HepG2 (cell line): ENCODE measurements at regions of chr4 and their contacts with region 1.

Region 1: GRCh38 chr4:145618932-145619638 is at the start of gene MMAA:
- DNase-seq: peak; percentile 83
- ATAC-seq: peak; percentile 99
- H3K4me3 ChIP-seq: peak within 1 kb of the TSS; percentile 80 to 91 (median 90)
- H3K27ac ChIP-seq: peak within 1 kb of the TSS; percentile 92
- H3K4me1 ChIP-seq: peaks cover 22% of the 10 kb centered on the region
- H3K27me3 ChIP-seq: no peaks in the 10 kb centered on the region; a peak in 1 of 5 replicates
- CTCF ChIP-seq: peak; percentile 81
- EP300 ChIP-seq: no peak
- POLR2A ChIP-seq: peak; percentile 88 to 94
- RAD21 ChIP-seq: peak; percentile 29
- total RNA-seq, gene MMAA: 2.8 and 4.5 TPM in 2 replicates

Region 2: GRCh38 chr4:144174401-144175067 is 1444.6 kb before region 1 on chr4:
- CTCF ChIA-PET with region 1: no interaction called
- POLR2A ChIA-PET with region 1: no interaction called
- in situ Hi-C with region 1: loop called (anchors 10 kb)
- intact Hi-C with region 1: loop called (anchors 10 kb)
- DNase-seq: peak; percentile 22
- ATAC-seq: peak; percentile 47; the same call in 2 of the 3 replicates
- H3K4me3 ChIP-seq: no peak overlapping the region
- H3K27ac ChIP-seq: no peak overlapping the region
- H3K4me1 ChIP-seq: no peaks in the 10 kb centered on the region
- H3K27me3 ChIP-seq: no peaks in the 10 kb centered on the region
- CTCF ChIP-seq: peak; percentile 50
- EP300 ChIP-seq: no peak
- POLR2A ChIP-seq: no peak
- RAD21 ChIP-seq: no peak

Region 3: DNA sequence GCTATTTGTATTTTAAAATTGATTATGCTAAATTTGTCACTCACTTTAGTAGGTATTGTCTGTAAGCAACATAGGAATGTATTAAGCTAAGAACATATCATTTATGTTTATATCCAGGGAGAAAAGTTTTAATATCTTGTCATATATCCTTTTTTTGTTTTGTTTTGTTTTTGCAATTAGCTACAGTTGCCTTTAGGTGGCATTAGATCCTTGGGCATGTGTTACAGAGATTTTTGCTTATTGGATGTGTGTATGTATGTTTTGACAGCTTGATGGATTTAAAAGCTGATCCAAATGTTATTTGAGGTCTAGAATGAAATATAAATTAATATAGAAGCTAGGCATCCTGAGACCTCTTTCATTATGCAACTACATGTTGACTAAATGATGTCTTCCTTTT is 402.6 kb before region 1 on chr4:
- CTCF ChIA-PET with region 1: interaction called, 3 read pairs
- POLR2A ChIA-PET with region 1: interaction called, 3 read pairs
- in situ Hi-C with region 1: loop called (anchors 10 kb)
- intact Hi-C with region 1: loop called (anchors 5 kb)
- DNase-seq: no peak
- ATAC-seq: no peak
- H3K4me3 ChIP-seq: no peak overlapping the region
- H3K27ac ChIP-seq: no peak overlapping the region
- H3K4me1 ChIP-seq: no peaks in the 10 kb centered on the region
- H3K27me3 ChIP-seq: no peaks in the 10 kb centered on the region; a peak in 2 of 5 replicates
- CTCF ChIP-seq: peak; percentile 53
- EP300 ChIP-seq: no peak
- POLR2A ChIP-seq: no peak
- RAD21 ChIP-seq: no peak

Region 4: GRCh38 chr4:145481164-145481941 is 137.7 kb before region 1 on chr4 and contains the start of gene SMAD1:
- CTCF ChIA-PET with region 1: no interaction called
- POLR2A ChIA-PET with region 1: no interaction called
- in situ Hi-C with region 1: no loop called
- intact Hi-C with region 1: loop called (anchors 5 kb)
- DNase-seq: peak; percentile 53
- ATAC-seq: peak; percentile 93
- H3K4me3 ChIP-seq: peak within 1 kb of the TSS; percentile 81 to 83 (median 82)
- H3K27ac ChIP-seq: peak within 1 kb of the TSS; percentile 89
- H3K4me1 ChIP-seq: peaks cover 36% of the 10 kb centered on the region
- H3K27me3 ChIP-seq: no peaks in the 10 kb centered on the region; a peak in 1 of 5 replicates
- CTCF ChIP-seq: no peak
- EP300 ChIP-seq: no peak
- POLR2A ChIP-seq: peak; percentile 57 to 58; a peak in 3 of 4 replicates
- RAD21 ChIP-seq: no peak; the same call in 1 of the 2 replicates
- total RNA-seq, gene SMAD1: 12.7 and 14.0 TPM in 2 replicates

Region 5: DNA sequence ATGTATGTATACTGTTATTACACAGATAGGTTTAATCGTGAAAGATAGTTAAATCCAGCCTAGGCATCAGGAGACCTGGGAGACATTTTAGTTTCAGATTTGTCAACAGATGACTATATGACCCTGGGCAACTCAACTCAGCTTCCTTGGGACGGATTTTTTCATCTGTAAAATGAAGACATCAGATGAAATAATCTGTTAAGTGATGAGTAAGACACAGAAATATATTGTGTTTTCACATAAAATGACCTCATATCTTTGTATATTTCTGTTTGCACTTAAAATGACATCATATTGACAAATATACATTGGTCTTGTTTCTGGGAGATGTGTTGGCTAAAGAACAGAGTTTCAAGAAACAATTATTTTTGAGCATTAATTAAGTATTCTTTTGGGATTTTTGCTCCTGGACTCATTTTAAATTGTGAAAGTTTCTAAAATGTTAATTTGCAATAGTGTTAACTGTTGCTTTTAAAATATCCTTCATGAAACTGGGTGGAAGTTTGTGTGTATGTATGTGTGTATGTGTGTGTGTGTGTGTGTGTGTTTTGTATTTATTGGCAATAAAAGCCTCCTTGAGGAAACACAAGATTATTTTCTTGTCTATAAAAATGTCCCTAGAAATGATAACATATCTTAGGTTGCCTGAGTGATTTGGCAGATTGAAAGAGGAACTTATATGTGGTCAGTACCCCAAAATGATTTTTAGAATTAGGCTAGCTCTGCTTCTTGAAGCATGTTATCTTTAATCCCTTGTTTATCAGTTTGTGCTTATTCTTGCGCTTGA is 29.0 kb before region 1 on chr4:
- CTCF ChIA-PET with region 1: no interaction called
- POLR2A ChIA-PET with region 1: no interaction called
- in situ Hi-C with region 1: no loop called
- intact Hi-C with region 1: no loop called
- DNase-seq: no peak
- ATAC-seq: no peak
- H3K4me3 ChIP-seq: no peak overlapping the region
- H3K27ac ChIP-seq: no peak overlapping the region
- H3K4me1 ChIP-seq: no peaks in the 10 kb centered on the region
- H3K27me3 ChIP-seq: no peaks in the 10 kb centered on the region; a peak in 1 of 5 replicates
- CTCF ChIP-seq: no peak
- EP300 ChIP-seq: no peak
- POLR2A ChIP-seq: no peak
- RAD21 ChIP-seq: no peak

Region 6: DNA sequence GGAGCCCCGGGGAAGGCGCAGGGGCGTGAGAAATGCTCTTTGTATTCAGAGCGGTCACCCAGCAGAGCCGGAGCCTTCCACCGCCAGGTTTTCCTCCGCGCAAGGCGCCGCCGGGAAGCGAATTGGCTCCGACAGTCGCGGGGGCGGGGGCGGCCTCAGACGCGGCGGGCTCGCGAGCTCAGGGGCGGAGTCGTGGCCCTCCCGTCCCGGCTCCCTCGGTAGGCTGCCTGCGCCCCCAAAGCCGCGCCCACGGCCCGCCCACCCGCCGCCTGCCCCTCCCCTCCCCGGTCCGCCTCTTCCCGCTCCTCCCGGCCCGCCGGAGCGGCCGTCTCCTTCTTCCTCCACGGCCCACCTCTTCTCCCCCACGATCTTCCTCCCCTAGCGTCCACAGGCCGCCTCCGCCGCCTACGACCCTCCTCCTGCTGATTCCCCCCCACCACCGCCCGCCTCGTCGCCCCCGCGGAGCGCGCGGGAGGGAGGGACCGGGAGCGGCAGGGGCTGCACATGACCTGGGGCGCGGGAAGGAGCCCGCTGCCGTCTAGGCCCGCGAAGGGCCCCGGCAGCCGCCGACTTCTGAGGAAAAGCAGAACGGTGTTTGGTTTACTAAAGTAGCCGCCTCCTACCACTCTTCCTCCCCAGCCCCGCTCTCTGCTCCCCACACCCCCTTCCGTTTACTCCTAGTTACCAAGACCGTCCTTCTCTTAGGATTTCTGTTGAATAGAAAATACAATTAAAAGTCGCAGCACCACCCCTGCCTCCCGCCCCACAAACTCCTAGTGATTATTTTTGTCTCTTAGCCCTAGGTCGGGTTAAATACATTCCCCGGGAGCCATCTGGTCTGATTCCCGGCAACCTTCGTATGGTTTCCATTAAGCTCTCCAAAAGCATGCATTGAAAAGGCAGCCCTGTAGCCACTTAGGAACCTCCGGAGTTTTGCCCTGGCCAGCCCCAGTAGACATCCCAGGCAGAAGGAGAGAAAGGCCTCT is 114.1 kb after region 1 on chr4:
- CTCF ChIA-PET with region 1: no interaction called
- POLR2A ChIA-PET with region 1: no interaction called
- in situ Hi-C with region 1: no loop called
- intact Hi-C with region 1: loop called (anchors 2 kb)
- DNase-seq: peak; percentile 53
- ATAC-seq: peak; percentile 83
- H3K4me3 ChIP-seq: peak overlapping the region; percentile 59 to 73 (median 60); a peak in 5 of 6 replicates
- H3K27ac ChIP-seq: no peak overlapping the region
- H3K4me1 ChIP-seq: peaks cover 16% of the 10 kb centered on the region
- H3K27me3 ChIP-seq: peaks cover 0 to 38% of the 10 kb centered on the region in 2 experiments; a peak in 3 of 5 replicates
- CTCF ChIP-seq: no peak
- EP300 ChIP-seq: no peak
- POLR2A ChIP-seq: no peak
- RAD21 ChIP-seq: no peak